IMR-90 (cell line): ENCODE measurements at regions of chr1 and their contacts with region 1.

Region 1: GRCh38 chr1:113978863-113979702 is at the start of gene OLFML3:
- DNase-seq: peak; percentile 95
- ATAC-seq: peak; percentile 79
- H3K4me3 ChIP-seq: peak within 1 kb of the TSS; percentile 43
- H3K27ac ChIP-seq: peak within 1 kb of the TSS; percentile 94
- H3K4me1 ChIP-seq: peaks cover 31% of the 10 kb centered on the region
- H3K27me3 ChIP-seq: no peaks in the 10 kb centered on the region
- CTCF ChIP-seq: peak; percentile 83
- POLR2A ChIP-seq: peak; percentile 42; the same call in 1 of the 2 replicates
- RAD21 ChIP-seq: peak; percentile 82
- total RNA-seq, gene OLFML3: 37.8 and 40.9 TPM in 2 replicates

Region 2: GRCh38 chr1:113928941-113929749 is 49.9 kb before region 1 on chr1 and contains the start of gene HIPK1:
- CTCF ChIA-PET with region 1: interaction called, 3 read pairs
- POLR2A ChIA-PET with region 1: no interaction called
- dilution Hi-C with region 1: no loop called
- in situ Hi-C with region 1: no loop called
- intact Hi-C with region 1: loop called (anchors 2 kb)
- DNase-seq: peak; percentile 82
- ATAC-seq: peak; percentile 90
- H3K4me3 ChIP-seq: peak within 1 kb of the TSS; percentile 96
- H3K27ac ChIP-seq: peak within 1 kb of the TSS; percentile 97
- H3K4me1 ChIP-seq: no peaks in the 10 kb centered on the region
- H3K27me3 ChIP-seq: no peaks in the 10 kb centered on the region
- CTCF ChIP-seq: no peak
- POLR2A ChIP-seq: peak; percentile 77
- RAD21 ChIP-seq: no peak
- total RNA-seq, gene HIPK1: 25.3 and 33.9 TPM in 2 replicates

Region 3: GRCh38 chr1:114040326-114041015 is 61.4 kb after region 1 on chr1:
- CTCF ChIA-PET with region 1: no interaction called
- POLR2A ChIA-PET with region 1: no interaction called
- dilution Hi-C with region 1: no loop called
- in situ Hi-C with region 1: no loop called
- intact Hi-C with region 1: no loop called
- DNase-seq: no peak
- ATAC-seq: no peak
- H3K4me3 ChIP-seq: no peak overlapping the region
- H3K27ac ChIP-seq: no peak overlapping the region
- H3K4me1 ChIP-seq: no peaks in the 10 kb centered on the region
- H3K27me3 ChIP-seq: peaks cover 27% of the 10 kb centered on the region
- CTCF ChIP-seq: no peak
- POLR2A ChIP-seq: no peak
- RAD21 ChIP-seq: no peak

Region 4: GRCh38 chr1:114219172-114219868 is 240.2 kb after region 1 on chr1:
- CTCF ChIA-PET with region 1: interaction called, 4 read pairs
- POLR2A ChIA-PET with region 1: no interaction called
- dilution Hi-C with region 1: no loop called
- in situ Hi-C with region 1: no loop called
- intact Hi-C with region 1: loop called (anchors 2 kb)
- DNase-seq: peak; percentile 2
- ATAC-seq: peak; percentile 42; the same call in 1 of the 2 replicates
- H3K4me3 ChIP-seq: no peak overlapping the region
- H3K27ac ChIP-seq: no peak overlapping the region
- H3K4me1 ChIP-seq: no peaks in the 10 kb centered on the region
- H3K27me3 ChIP-seq: peaks cover 9% of the 10 kb centered on the region
- CTCF ChIP-seq: no peak
- POLR2A ChIP-seq: no peak
- RAD21 ChIP-seq: no peak

Region 5: DNA sequence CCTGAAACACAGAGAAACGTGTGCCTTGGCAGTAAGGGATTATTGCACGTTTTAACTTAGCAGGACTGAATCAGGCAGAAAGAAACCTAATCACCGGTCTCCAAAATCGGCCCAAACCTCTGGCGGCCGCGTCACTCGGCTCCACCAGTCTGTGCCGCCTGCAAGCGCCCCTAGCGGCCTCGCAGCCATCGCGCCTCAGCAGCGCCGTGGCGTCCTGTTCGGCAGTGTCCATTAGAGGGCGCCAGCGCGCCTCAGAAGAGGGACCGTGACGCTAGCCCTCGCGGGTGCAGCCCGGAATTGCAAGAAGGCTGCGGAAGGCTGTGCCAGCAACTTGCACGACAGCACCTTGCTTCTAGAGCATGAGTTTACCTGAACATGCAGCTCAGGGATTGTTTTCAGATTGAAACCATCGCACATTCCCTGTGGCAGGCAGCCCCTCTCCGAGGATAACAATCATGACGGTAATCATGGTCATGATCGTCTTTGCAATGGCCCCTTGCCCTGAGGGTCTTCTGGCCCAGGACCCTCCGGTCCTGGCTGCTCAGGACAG is 367.5 kb after region 1 on chr1:
- CTCF ChIA-PET with region 1: interaction called, 9 read pairs
- POLR2A ChIA-PET with region 1: no interaction called
- dilution Hi-C with region 1: no loop called
- in situ Hi-C with region 1: no loop called
- intact Hi-C with region 1: loop called (anchors 1 kb)
- DNase-seq: peak; percentile 90
- ATAC-seq: peak; percentile 98
- H3K4me3 ChIP-seq: peak overlapping the region; percentile 49
- H3K27ac ChIP-seq: 0 out of 2 replicates have a peak overlapping the region, but pooled peaks have one; percentile 5
- H3K4me1 ChIP-seq: peaks cover 6% of the 10 kb centered on the region; the same call in 1 of the 2 replicates
- H3K27me3 ChIP-seq: peaks cover 5% of the 10 kb centered on the region; the same call in 1 of the 2 replicates
- CTCF ChIP-seq: peak; percentile 100; the same call in 1 of the 2 replicates
- POLR2A ChIP-seq: peak; percentile 43; the same call in 1 of the 2 replicates
- RAD21 ChIP-seq: peak; percentile 97

Region 6: GRCh38 chr1:114558544-114558943 is 579.5 kb after region 1 on chr1:
- CTCF ChIA-PET with region 1: no interaction called
- POLR2A ChIA-PET with region 1: no interaction called
- dilution Hi-C with region 1: no loop called
- in situ Hi-C with region 1: no loop called
- intact Hi-C with region 1: loop called (anchors 2 kb)
- DNase-seq: no peak
- ATAC-seq: no peak
- H3K4me3 ChIP-seq: no peak overlapping the region
- H3K27ac ChIP-seq: no peak overlapping the region
- H3K4me1 ChIP-seq: no peaks in the 10 kb centered on the region
- H3K27me3 ChIP-seq: no peaks in the 10 kb centered on the region
- CTCF ChIP-seq: 0 out of 2 replicates have a peak, but pooled peaks have one; percentile 24
- POLR2A ChIP-seq: no peak
- RAD21 ChIP-seq: 0 out of 2 replicates have a peak, but pooled peaks have one; percentile 5

Region 7: GRCh38 chr1:114716304-114717170 is 737.5 kb after region 1 on chr1 and contains the start of gene NRAS:
- CTCF ChIA-PET with region 1: no interaction called
- POLR2A ChIA-PET with region 1: no interaction called
- dilution Hi-C with region 1: no loop called
- in situ Hi-C with region 1: loop called (anchors 25 kb)
- intact Hi-C with region 1: loop called (anchors 2 kb)
- DNase-seq: peak; percentile 91
- ATAC-seq: peak; percentile 91
- H3K4me3 ChIP-seq: peak within 1 kb of the TSS; percentile 86
- H3K27ac ChIP-seq: peak within 1 kb of the TSS; percentile 96
- H3K4me1 ChIP-seq: no peaks in the 10 kb centered on the region
- H3K27me3 ChIP-seq: no peaks in the 10 kb centered on the region
- CTCF ChIP-seq: no peak
- POLR2A ChIP-seq: peak; percentile 74
- RAD21 ChIP-seq: no peak
- total RNA-seq, gene NRAS: 85.9 and 110 TPM in 2 replicates